ENCODE measurements at regions of chr19 and their contacts with region 1.

Region 1: DNA sequence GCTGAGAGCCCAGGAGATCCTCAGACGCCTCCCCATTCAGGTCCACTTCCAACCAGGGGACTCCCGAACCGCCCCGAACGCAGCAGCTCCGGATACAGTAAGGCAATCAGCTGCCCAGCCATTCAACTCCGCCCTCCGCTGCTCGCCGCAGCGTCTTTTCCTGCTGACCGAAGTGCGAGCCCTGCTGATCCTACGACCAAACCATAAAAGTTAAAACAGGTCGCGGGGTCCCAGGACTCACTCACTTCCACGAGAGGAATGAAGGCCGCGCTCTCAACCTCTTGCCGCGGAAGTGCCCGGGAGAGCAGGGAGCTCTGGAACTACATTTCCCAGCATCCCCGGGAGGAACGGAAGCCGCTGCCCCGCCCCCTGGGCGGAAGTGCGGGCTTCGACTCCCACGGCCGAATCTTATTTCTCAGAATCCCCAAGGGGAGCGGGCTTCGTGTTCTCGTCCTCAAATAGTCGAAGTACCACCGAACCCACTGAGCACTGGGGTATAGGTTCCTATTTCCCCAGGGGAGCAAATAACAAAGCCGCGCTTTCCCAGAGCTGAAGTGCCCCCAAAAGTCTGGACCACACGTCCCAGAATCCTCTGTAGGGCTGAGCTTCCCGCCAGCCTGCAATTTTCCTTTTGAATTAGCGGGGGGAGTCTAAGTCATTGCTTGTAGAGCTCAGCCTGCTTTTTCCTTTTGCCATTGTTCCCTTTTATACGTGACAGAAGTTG is at the start of gene ZNF45:
- DNase-seq: peak; percentile 92
- ATAC-seq: peak; percentile 95
- H3K4me3 Mint-ChIP-seq: peak within 1 kb of the TSS; percentile 93
- H3K27ac Mint-ChIP-seq: peak within 1 kb of the TSS; percentile 91
- H3K4me1 Mint-ChIP-seq: peaks cover 22% of the 10 kb centered on the region
- H3K27me3 Mint-ChIP-seq: no peaks in the 10 kb centered on the region
- total RNA-seq, gene ZNF45: 9.6 to 12.1 TPM

Region 2: DNA sequence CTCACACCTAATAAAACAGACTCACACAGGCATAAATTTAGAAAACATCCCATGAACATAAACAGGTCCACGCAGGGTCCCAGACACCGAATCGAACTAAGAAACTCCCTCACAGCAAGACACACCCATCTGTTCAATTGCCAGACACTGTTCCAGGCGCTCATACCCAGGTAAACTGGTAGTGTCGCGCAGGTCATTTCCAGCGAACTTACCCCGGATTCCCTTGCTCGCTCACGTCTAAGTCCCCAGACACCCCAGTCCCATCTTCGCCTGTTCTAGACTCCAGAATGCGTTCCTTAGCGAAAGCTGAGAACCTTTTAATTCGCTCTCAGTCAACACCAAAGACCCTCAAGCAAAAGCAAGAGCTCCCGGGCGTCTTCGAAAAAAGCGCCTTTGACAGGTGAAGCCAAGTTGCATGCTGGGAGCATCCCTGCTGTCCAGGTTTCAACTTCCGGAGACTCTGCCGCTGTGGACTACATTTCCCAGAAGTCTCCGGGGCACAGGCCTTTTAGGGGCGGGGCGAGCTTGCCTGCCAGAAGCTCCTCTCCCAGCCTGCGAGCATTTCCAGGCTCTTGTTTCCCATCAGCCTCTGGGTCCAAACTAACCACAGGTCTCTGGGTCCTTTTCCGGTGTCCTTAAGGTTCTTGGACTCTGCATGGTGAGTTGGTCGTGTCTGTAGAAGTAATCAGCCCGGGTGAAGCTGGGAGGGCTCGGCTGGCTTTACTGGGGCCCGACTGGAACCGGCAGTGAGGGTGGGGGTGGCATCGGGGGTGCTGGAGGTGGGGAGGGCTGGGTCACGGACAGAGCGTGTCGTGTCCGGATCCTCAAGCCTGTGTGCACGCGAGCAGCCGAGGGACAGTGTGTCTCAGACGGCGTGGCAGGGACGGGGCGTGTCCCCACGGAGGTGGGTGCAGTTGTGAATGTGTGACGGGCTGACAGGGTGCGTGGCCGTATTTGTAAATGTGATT is 108.1 kb before region 1 on chr19 and contains the start of gene ZNF283:
- CTCF ChIA-PET with region 1: no interaction called
- POLR2A ChIA-PET with region 1: no interaction called
- intact Hi-C with region 1: loop called (anchors 1 to 10 kb)
- DNase-seq: peak; percentile 92
- ATAC-seq: peak; percentile 99
- H3K4me3 Mint-ChIP-seq: peak within 1 kb of the TSS; percentile 87
- H3K27ac Mint-ChIP-seq: peak within 1 kb of the TSS; percentile 60
- H3K4me1 Mint-ChIP-seq: peaks cover 14% of the 10 kb centered on the region
- H3K27me3 Mint-ChIP-seq: peaks cover 5% of the 10 kb centered on the region
- total RNA-seq, gene ZNF283: 5.4 to 6.8 TPM

Region 3: DNA sequence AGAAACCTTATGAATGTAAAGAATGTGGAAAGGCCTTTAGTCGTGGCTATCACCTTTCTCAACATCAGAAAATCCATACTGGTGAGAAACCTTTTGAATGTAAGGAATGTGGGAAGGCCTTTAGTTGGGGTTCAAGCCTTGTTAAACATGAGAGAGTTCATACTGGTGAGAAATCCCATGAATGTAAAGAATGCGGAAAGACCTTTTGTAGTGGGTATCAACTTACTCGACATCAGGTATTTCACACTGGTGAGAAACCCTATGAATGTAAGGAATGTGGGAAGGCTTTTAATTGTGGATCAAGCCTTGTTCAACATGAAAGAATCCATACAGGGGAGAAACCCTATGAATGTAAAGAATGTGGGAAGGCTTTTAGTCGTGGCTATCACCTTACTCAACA is 87.3 kb before region 1 on chr19:
- CTCF ChIA-PET with region 1: no interaction called
- POLR2A ChIA-PET with region 1: no interaction called
- intact Hi-C with region 1: no loop called
- DNase-seq: no peak
- ATAC-seq: no peak
- H3K4me3 Mint-ChIP-seq: no peak overlapping the region
- H3K27ac Mint-ChIP-seq: no peak overlapping the region
- H3K4me1 Mint-ChIP-seq: no peaks in the 10 kb centered on the region
- H3K27me3 Mint-ChIP-seq: no peaks in the 10 kb centered on the region

Region 4: DNA sequence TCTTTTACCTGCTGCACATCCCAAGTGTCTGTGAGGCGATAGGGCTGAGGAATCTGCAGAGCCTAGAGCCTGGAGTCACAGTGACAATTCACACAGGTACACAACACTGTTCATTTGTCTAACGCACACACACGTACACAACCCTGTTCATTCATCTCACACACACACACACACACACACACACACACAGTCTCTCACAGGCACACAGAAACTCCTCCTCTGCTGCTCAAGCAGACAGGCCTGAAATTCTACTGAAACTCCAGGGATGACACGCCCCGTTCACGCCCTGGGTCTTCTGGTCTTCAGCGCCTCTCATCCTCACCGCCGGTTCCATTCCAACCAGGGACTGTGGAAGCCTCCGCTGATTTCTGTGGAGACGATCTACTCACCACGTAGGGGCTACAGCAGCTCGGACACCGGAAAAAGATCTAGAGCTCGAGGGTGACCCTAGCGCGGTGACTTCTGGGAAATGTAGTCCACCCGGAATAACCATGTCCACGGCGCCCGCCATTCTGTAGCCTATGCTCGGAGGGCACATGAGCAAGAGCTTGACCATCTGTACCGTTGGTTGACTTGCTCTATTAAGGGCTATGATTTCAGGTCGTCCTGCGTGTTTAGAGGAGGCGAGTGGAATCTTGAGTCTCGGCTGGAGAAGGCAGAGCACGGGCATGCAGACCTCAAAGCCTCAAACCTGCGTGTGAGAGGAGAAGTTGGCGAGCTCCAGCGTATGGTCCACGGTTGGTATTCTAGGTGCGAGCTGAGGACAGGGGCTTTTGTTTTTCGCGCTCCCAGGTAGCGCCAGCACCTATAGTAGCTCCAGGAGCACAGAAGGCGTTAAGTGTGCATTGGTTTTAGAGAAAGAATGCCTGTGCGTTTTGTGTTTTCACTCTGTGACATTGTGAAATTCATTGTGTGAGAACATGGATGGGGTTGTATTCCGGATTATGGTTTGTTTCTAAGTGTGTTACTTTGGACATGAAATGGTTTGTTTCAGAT is 33.5 kb before region 1 on chr19:
- CTCF ChIA-PET with region 1: no interaction called
- POLR2A ChIA-PET with region 1: interaction called, 3 read pairs
- intact Hi-C with region 1: loop called in 1 of 2 experiments (anchors 1 kb)
- DNase-seq: peak; percentile 82
- ATAC-seq: peak; percentile 96
- H3K4me3 Mint-ChIP-seq: peak overlapping the region; percentile 82
- H3K27ac Mint-ChIP-seq: peak overlapping the region; percentile 78
- H3K4me1 Mint-ChIP-seq: peaks cover 19% of the 10 kb centered on the region
- H3K27me3 Mint-ChIP-seq: no peaks in the 10 kb centered on the region

Region 5: GRCh38 chr19:43983912-43984686 is 49.0 kb after region 1 on chr19 and contains the start of gene ZNF155:
- CTCF ChIA-PET with region 1: no interaction called
- POLR2A ChIA-PET with region 1: no interaction called
- intact Hi-C with region 1: loop called (anchors 1 kb)
- DNase-seq: peak; percentile 82
- ATAC-seq: peak; percentile 97
- H3K4me3 Mint-ChIP-seq: peak within 1 kb of the TSS; percentile 90
- H3K27ac Mint-ChIP-seq: peak within 1 kb of the TSS; percentile 92
- H3K4me1 Mint-ChIP-seq: peaks cover 11% of the 10 kb centered on the region
- H3K27me3 Mint-ChIP-seq: no peaks in the 10 kb centered on the region
- total RNA-seq, gene ZNF155: 4.5 to 6.0 TPM

Region 6: DNA sequence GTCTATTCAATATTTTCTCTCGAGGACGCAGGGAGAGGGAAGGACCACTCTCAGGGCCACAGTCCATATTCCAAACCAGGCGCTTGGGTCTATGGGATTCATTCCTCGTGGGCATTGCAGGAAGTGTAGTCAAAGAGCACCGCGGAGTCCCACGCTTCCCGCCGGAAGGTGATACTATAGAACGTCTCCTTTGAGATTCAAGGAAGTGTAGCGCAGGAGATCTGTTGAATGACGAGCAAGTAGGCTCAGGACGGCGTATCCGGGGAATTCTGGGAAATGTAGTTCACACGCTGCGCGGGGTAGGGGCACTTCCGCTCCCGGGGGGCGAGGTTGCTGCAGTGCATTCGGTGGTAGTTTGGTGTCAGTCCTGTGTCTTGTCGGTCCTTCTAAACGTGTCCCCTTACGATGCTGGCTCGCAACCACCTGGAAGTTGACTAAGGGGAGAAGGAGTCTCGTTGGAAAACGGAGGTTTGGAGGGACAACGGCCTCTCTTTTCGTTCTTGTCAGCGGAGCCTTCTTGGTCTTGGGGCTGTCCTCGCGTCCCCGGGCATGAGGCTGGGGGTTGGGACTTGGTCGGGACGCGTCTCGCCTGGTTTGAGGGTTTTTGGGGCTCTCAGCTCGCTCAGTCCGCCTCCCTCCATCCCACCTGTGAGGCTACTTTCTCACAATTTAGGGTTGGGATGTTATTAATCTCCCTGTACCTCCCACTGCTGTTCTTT is 136.8 kb after region 1 on chr19 and contains the start of gene ZNF284:
- CTCF ChIA-PET with region 1: no interaction called
- POLR2A ChIA-PET with region 1: no interaction called
- intact Hi-C with region 1: loop called in 1 of 2 experiments (anchors 1 kb)
- DNase-seq: peak; percentile 88
- ATAC-seq: peak; percentile 99
- H3K4me3 Mint-ChIP-seq: peak within 1 kb of the TSS; percentile 83
- H3K27ac Mint-ChIP-seq: peak within 1 kb of the TSS; percentile 78
- H3K4me1 Mint-ChIP-seq: peaks cover 23% of the 10 kb centered on the region
- H3K27me3 Mint-ChIP-seq: peaks cover 2% of the 10 kb centered on the region
- total RNA-seq, gene ZNF284: 2.1 TPM

Region 7: GRCh38 chr19:44207126-44207803 is 272.1 kb after region 1 on chr19:
- CTCF ChIA-PET with region 1: no interaction called
- POLR2A ChIA-PET with region 1: no interaction called
- intact Hi-C with region 1: loop called in 1 of 2 experiments (anchors 1 kb)
- DNase-seq: peak; percentile 84
- ATAC-seq: peak; percentile 93
- H3K4me3 Mint-ChIP-seq: peak overlapping the region; percentile 80
- H3K27ac Mint-ChIP-seq: peak overlapping the region; percentile 73
- H3K4me1 Mint-ChIP-seq: peaks cover 4% of the 10 kb centered on the region
- H3K27me3 Mint-ChIP-seq: peaks cover 2% of the 10 kb centered on the region

Region 8: DNA sequence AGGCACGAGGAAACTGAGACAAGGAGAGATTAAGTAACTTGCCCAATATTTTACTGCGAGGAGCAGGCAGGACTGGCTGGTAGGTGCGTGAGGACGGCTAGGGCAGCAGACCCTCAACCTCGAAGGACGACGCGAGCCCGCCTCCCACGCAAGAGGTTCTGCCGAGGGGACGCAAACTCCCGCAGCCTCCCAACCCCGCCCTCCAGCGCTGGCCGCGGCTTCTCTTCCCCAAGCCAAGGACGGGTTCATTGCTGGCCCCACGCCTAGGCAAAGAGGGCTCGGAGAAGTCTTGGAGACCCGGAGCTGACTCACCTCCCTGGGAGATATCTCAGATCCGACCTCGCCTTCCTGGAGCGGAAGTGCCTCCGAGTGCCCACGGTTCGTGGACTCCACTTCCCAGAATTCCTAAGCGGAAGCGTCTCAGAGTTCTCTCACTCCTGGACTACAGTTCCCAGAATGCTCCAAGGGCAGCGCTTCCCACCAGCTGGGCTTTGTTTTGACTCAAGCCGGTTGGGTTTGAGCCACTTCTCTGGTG is 369.6 kb after region 1 on chr19 and contains the start of gene ZNF235:
- CTCF ChIA-PET with region 1: no interaction called
- POLR2A ChIA-PET with region 1: no interaction called
- intact Hi-C with region 1: loop called in 1 of 2 experiments (anchors 1 kb)
- DNase-seq: peak; percentile 87
- ATAC-seq: peak; percentile 97
- H3K4me3 Mint-ChIP-seq: peak within 1 kb of the TSS; percentile 83
- H3K27ac Mint-ChIP-seq: peak within 1 kb of the TSS; percentile 64
- H3K4me1 Mint-ChIP-seq: peaks cover 12% of the 10 kb centered on the region
- H3K27me3 Mint-ChIP-seq: no peaks in the 10 kb centered on the region
- total RNA-seq, gene ZNF235: 2.1 to 2.7 TPM

Measured in activated CD4-positive, alpha-beta T cell treated with anti-CD3 and anti-CD28 coated beads for 36 hours (primary cell).